SK-N-SH (cell line): ENCODE measurements at regions of chr17 and their contacts with region 1.

Region 1: DNA sequence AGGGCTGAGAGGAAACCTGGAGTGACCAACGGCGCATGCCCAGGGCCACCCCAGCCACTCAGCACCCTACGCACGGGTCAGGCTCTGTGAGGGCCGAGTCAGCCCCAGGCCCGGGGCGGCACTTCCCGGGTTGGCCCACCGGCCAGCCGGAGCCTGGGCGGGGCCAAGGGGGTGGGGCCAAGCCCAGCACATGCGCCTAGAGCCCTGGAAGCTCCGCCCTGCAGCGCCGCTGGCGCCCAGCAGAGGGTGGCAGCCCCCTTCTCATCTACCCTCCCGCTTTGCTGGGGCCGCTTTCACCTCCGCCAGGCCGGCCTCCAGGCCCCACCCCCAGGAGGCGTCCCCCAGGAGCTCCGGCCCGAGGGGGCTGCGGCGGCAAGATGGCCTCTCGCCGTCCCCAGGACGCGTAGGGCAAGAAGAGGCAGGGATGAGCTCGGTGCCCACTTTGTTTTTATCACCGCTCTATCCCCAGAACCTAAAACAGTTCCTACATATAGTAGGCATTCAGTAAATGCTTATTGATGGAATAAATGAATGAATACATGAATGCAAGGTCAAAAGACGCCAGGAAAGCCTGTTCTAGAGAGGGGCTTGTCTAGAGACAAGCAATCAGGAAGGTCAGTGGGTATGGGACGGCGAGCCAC is 31.3 kb downstream of the MYO18A start:
- DNase-seq: peak; percentile 99
- H3K4me3 ChIP-seq: peak overlapping the region; percentile 47 to 50
- H3K27ac ChIP-seq: peak overlapping the region; percentile 50 to 82; a peak in 3 of 4 replicates
- H3K4me1 ChIP-seq: peaks cover 30 to 35% of the 10 kb centered on the region in 2 experiments
- H3K27me3 ChIP-seq: no peaks in the 10 kb centered on the region
- CTCF ChIP-seq: peak; percentile 81
- EP300 ChIP-seq: 0 out of 4 replicates have a peak, but pooled peaks of 1 of the 2 experiments have one; percentile 17
- RAD21 ChIP-seq: peak; percentile 91

Region 2: DNA sequence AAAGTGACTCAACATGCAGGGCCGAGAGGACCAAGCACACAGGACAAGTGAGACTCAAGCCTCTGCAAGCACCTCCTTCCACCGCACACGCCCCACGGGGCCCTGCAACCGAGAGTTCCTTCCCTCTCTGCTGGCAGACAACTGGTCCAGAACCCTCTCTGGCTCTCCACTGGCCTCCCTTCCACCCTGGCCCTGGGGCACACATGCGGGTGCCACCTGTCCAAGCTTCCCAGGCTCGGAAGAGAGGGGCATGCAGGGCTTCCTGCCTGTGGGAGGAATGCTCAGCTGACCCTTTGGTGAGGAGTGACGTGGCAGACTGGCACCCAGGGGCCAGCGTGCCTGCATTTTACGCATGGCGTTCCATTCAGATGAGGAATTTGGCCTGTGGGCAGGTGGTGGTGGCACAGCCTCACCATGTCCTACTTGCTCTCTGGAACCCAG is 46.1 kb before region 1 on chr17:
- CTCF ChIA-PET with region 1: no interaction called
- POLR2A ChIA-PET with region 1: no interaction called
- DNase-seq: peak; percentile 80
- H3K4me3 ChIP-seq: no peak overlapping the region
- H3K27ac ChIP-seq: peak overlapping the region in 1 of 2 experiments; percentile 95; a peak in 2 of 4 replicates
- H3K4me1 ChIP-seq: peaks cover 0 to 30% of the 10 kb centered on the region in 2 experiments; a peak in 2 of 4 replicates
- H3K27me3 ChIP-seq: no peaks in the 10 kb centered on the region
- CTCF ChIP-seq: no peak
- EP300 ChIP-seq: peak in 1 of 2 experiments; percentile 7; a peak in 1 of 4 replicates
- RAD21 ChIP-seq: no peak

Region 3: DNA sequence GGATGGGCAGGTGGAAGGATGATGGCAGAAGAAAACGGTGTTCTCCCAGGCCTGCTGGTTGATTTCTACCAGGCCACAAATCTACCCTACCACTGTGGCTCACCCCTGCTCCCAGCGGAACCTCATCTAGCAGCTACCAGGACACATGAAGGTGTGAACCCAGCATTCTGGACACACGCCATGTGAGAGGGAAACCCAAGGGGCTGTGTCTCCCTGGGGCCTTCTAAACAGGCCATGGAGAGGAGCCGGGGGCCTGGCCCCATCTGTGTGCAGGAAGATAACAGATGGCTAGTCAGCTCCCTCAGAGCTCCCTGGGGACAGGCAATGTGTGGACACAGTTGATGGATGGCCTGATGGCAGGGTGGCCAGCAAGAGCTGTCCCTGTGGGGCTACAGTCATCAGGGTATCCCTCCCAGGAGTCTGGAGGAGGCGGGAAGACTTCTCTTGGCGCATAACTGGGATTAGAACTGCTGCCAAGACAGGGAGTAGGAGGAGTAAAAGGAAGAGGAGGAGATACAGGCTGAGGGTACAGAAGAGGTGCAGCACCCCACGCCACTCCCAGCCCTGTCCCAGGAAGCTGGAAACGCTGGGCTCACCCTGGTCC is 13.9 kb after region 1 on chr17:
- CTCF ChIA-PET with region 1: interaction called, 42 read pairs
- POLR2A ChIA-PET with region 1: interaction called, 4 read pairs
- DNase-seq: no peak
- H3K4me3 ChIP-seq: no peak overlapping the region
- H3K27ac ChIP-seq: no peak overlapping the region; a peak in 1 of 4 replicates
- H3K4me1 ChIP-seq: peaks cover 22 to 27% of the 10 kb centered on the region in 2 experiments; a peak in 2 of 4 replicates
- H3K27me3 ChIP-seq: no peaks in the 10 kb centered on the region
- CTCF ChIP-seq: no peak
- EP300 ChIP-seq: no peak
- RAD21 ChIP-seq: no peak

Region 4: DNA sequence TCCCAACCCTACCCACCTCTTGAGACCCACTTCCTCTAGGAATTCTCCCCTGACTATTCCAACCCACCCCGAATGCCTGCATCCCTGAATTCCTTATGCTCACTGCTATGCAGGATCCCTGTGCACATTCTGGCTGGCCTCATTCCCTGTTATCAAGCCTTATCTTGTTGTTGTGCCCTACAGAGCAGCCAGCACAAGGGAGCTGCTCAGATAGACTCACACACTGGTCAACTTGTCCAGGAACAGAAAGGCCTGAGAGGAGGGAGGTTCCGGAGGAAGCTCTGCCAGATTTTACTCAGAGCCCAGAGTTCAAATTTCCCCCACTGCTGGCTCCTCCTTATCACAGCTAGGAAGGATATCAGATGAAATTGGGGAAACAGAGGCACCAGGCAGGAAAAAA is 56.1 kb after region 1 on chr17:
- CTCF ChIA-PET with region 1: interaction called, 438 read pairs
- POLR2A ChIA-PET with region 1: no interaction called
- DNase-seq: peak; percentile 46
- H3K4me3 ChIP-seq: no peak overlapping the region
- H3K27ac ChIP-seq: no peak overlapping the region
- H3K4me1 ChIP-seq: no peaks in the 10 kb centered on the region; a peak in 1 of 4 replicates
- H3K27me3 ChIP-seq: no peaks in the 10 kb centered on the region
- CTCF ChIP-seq: no peak
- EP300 ChIP-seq: no peak
- RAD21 ChIP-seq: no peak

Region 5: GRCh38 chr17:29252101-29252866 is 103.4 kb after region 1 on chr17:
- CTCF ChIA-PET with region 1: interaction called, 10 read pairs
- POLR2A ChIA-PET with region 1: no interaction called
- DNase-seq: peak; percentile 32
- H3K4me3 ChIP-seq: no peak overlapping the region
- H3K27ac ChIP-seq: no peak overlapping the region
- H3K4me1 ChIP-seq: peaks cover 0 to 29% of the 10 kb centered on the region in 2 experiments; a peak in 2 of 4 replicates
- H3K27me3 ChIP-seq: no peaks in the 10 kb centered on the region
- CTCF ChIP-seq: peak; percentile 67
- EP300 ChIP-seq: no peak
- RAD21 ChIP-seq: peak; percentile 25; the same call in 1 of the 2 replicates

Region 6: DNA sequence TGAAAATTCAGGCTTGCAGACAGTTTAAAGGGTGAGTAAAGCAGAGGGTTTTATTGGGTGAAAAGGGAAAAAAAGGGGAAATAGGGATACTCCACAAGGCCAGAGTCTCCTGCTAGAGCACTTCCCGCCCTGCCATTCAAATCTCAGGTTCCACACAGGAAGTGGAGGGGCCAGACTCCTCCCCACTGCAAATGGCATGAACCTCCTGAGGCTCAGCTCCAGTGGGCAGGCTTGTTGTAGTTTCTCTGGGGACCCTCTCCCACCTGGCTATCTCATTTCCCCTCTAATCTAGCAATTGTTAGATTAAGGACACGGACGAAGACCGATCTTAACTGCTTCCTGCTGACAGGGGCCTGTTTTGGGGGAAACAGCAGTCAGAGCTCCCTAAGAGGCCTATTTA is 284.6 kb after region 1 on chr17:
- CTCF ChIA-PET with region 1: no interaction called
- POLR2A ChIA-PET with region 1: no interaction called
- DNase-seq: no peak
- H3K4me3 ChIP-seq: no peak overlapping the region
- H3K27ac ChIP-seq: no peak overlapping the region
- H3K4me1 ChIP-seq: peaks cover 0 to 11% of the 10 kb centered on the region in 2 experiments; a peak in 2 of 4 replicates
- H3K27me3 ChIP-seq: no peaks in the 10 kb centered on the region
- CTCF ChIP-seq: no peak
- EP300 ChIP-seq: no peak
- RAD21 ChIP-seq: no peak